ENCODE measurements at regions of chr11 and their contacts with region 1.

Region 1: GRCh38 chr11:120229451-120230424 is 10.2 kb upstream of the POU2F3 start:
- DNase-seq: no peak
- H3K4me3 Mint-ChIP-seq: no peak overlapping the region
- H3K27ac Mint-ChIP-seq: no peak overlapping the region
- H3K4me1 Mint-ChIP-seq: no peaks in the 10 kb centered on the region
- H3K27me3 Mint-ChIP-seq: peaks cover 11% of the 10 kb centered on the region
- CTCF ChIP-seq: peak; percentile 61

Region 2: GRCh38 chr11:120172054-120172911 is 57.5 kb before region 1 on chr11:
- CTCF ChIA-PET with region 1: interaction called, 220 read pairs
- POLR2A ChIA-PET with region 1: interaction called, 4 read pairs
- intact Hi-C with region 1: loop called (anchors 1 kb)
- DNase-seq: peak; percentile 70
- H3K4me3 Mint-ChIP-seq: no peak overlapping the region
- H3K27ac Mint-ChIP-seq: no peak overlapping the region
- H3K4me1 Mint-ChIP-seq: no peaks in the 10 kb centered on the region
- H3K27me3 Mint-ChIP-seq: peaks cover 58% of the 10 kb centered on the region
- CTCF ChIP-seq: peak; percentile 87

Region 3: DNA sequence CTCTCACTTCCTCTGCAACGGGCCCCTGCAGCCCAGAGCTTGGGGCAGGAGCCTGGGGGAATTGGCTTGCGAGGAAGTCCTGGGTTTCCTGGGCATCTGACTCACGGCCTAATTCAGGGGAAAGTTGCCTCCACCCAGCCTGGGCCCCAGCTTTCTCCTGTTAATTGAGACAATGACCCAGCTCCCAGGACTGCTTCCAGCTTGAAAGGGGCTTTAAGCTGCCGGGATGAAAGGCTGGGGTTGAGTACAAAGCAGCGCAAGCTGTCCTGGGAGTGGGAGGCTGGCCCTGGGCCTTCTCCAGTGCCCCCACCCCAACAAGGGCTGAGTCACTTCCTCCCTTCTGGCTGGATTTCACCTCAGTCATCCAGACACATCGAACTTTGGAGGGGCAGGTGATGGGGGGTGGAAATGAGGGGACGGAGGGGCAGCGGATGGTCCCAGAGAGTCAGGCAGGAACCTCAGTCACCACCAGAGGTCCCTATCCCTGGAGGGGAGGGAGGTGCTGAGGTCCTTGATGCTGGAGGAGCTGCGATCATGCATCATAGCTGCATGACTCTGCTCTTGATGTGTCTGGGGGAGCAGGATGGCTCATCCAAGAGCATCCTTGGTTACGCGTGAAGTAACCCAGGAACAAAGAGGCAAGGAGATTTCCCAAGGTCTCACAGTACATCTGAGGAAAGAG is 49.0 kb before region 1 on chr11:
- CTCF ChIA-PET with region 1: interaction called, 220 read pairs
- POLR2A ChIA-PET with region 1: no interaction called
- intact Hi-C with region 1: no loop called
- DNase-seq: no peak
- H3K4me3 Mint-ChIP-seq: no peak overlapping the region
- H3K27ac Mint-ChIP-seq: no peak overlapping the region
- H3K4me1 Mint-ChIP-seq: peaks cover 6% of the 10 kb centered on the region
- H3K27me3 Mint-ChIP-seq: peaks cover 16% of the 10 kb centered on the region
- CTCF ChIP-seq: no peak

Region 4: GRCh38 chr11:120217941-120218694 is 11.6 kb before region 1 on chr11:
- CTCF ChIA-PET with region 1: interaction called, 10 read pairs
- POLR2A ChIA-PET with region 1: no interaction called
- intact Hi-C with region 1: no loop called
- DNase-seq: no peak
- H3K4me3 Mint-ChIP-seq: no peak overlapping the region
- H3K27ac Mint-ChIP-seq: no peak overlapping the region
- H3K4me1 Mint-ChIP-seq: peaks cover 7% of the 10 kb centered on the region
- H3K27me3 Mint-ChIP-seq: no peaks in the 10 kb centered on the region
- CTCF ChIP-seq: no peak

Measured in MCF 10A (cell line).